Activated CD4-positive, alpha-beta T cell treated with anti-CD3 and anti-CD28 coated beads for 36 hours (primary cell): ENCODE measurements at regions of chr17 and their contacts with region 1.

Region 1: GRCh38 chr17:32349854-32350665 is at the start of gene ZNF207:
- DNase-seq: peak; percentile 98
- ATAC-seq: peak; percentile 97
- H3K4me3 Mint-ChIP-seq: peak within 1 kb of the TSS; percentile 99
- H3K27ac Mint-ChIP-seq: peak within 1 kb of the TSS; percentile 100
- H3K4me1 Mint-ChIP-seq: peaks cover 28% of the 10 kb centered on the region
- H3K27me3 Mint-ChIP-seq: no peaks in the 10 kb centered on the region
- total RNA-seq, gene ZNF207: 197 to 231 TPM

Region 2: DNA sequence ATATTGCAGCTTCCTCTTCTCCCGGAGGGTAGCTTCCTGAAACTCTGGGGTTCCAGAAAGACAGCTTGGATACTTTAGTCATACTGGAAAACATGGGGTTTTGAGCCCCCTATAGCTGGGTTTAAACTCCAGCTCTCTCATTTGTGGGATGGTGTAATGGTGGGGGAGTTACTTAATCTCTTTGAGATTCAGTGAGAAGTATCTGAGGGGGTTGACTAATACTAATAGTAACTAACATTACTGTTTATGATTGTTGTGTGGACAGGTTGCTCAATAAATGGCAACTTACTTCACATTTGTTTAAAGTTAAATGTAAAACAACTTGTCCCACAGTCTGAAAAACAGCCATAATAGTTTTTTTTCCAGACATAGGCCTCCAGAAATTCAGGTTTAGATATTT is 418.3 kb before region 1 on chr17:
- CTCF ChIA-PET with region 1: no interaction called
- POLR2A ChIA-PET with region 1: no interaction called
- intact Hi-C with region 1: loop called in 1 of 2 experiments (anchors 5 kb)
- DNase-seq: no peak
- ATAC-seq: no peak
- H3K4me3 Mint-ChIP-seq: no peak overlapping the region
- H3K27ac Mint-ChIP-seq: no peak overlapping the region
- H3K4me1 Mint-ChIP-seq: peaks cover 7% of the 10 kb centered on the region
- H3K27me3 Mint-ChIP-seq: no peaks in the 10 kb centered on the region

Region 3: GRCh38 chr17:32006957-32007462 is 343.1 kb before region 1 on chr17 and contains the start of gene LRRC37B:
- CTCF ChIA-PET with region 1: no interaction called
- POLR2A ChIA-PET with region 1: no interaction called
- intact Hi-C with region 1: loop called in 1 of 2 experiments (anchors 1 kb)
- DNase-seq: peak; percentile 94
- ATAC-seq: peak; percentile 91
- H3K4me3 Mint-ChIP-seq: peak within 1 kb of the TSS; percentile 86
- H3K27ac Mint-ChIP-seq: peak within 1 kb of the TSS; percentile 90
- H3K4me1 Mint-ChIP-seq: peaks cover 26% of the 10 kb centered on the region
- H3K27me3 Mint-ChIP-seq: no peaks in the 10 kb centered on the region
- total RNA-seq, gene LRRC37B: 14.3 to 16.6 TPM

Region 4: GRCh38 chr17:32370426-32370825 is 20.4 kb after region 1 on chr17:
- CTCF ChIA-PET with region 1: interaction called, 9 read pairs
- POLR2A ChIA-PET with region 1: no interaction called
- intact Hi-C with region 1: loop called in 1 of 2 experiments (anchors 2 kb)
- DNase-seq: no peak
- ATAC-seq: peak; percentile 64
- H3K4me3 Mint-ChIP-seq: no peak overlapping the region
- H3K27ac Mint-ChIP-seq: no peak overlapping the region
- H3K4me1 Mint-ChIP-seq: peaks cover 27% of the 10 kb centered on the region
- H3K27me3 Mint-ChIP-seq: no peaks in the 10 kb centered on the region